ENCODE measurements at regions of chr6 and their contacts with region 1.

Region 1: DNA sequence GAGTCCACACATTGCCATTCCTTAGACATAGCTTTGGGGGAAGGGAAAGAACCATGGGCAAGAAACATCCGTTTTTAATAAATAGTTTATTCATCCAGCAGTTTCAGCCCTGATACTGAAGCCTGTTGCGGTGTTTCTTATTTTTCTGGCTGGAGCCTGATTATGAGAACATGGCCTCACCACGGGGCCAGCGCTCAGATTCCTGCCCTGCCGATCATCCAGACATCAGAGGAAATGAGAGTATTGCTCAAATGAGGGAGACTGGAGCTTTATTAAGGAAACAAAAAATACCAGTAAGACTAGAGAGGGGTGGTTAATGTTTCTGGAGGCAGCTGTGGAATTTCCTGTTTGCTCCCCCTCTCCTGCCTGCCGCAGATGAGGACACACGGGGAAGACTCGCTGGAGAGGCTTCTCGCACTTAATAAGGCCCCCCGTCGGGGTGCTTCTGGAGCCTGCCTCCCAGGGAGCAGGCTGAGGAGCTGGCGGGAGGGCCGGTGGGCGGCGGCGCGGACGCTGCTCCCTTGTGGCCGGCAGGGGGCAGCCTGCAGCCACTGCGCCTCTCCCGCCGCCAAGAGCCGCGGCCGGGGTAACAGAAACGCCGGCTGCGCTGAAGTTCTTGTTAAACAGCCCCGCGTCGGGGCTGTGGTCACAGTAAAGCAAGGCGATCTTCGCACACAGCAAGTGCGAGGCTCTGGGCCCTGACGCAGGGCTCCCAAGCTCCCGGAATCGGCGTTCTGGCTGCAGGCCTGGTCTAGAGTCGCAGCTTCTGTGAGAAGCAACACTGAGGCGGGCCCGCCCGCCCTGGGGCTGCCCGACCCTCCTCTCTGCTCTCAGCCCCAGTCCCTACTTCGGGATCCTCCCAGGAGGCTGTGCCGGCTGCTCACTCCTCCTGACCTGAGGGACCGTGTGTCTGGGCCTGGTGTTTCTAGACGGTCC is 17.5 kb downstream of the LEMD2 start:
- DNase-seq: peak; percentile 92
- H3K4me3 ChIP-seq: peak overlapping the region in 1 of 2 experiments; percentile 40; a peak in 1 of 4 replicates
- H3K27ac ChIP-seq: peak overlapping the region; percentile 78 to 84
- H3K4me1 ChIP-seq: peaks cover 16 to 48% of the 10 kb centered on the region in 2 experiments; a peak in 3 of 4 replicates
- H3K27me3 ChIP-seq: no peaks in the 10 kb centered on the region
- CTCF ChIP-seq: peak; percentile 92
- EP300 ChIP-seq: peak; percentile 30 to 68; a peak in 2 of 4 replicates
- RAD21 ChIP-seq: peak; percentile 84

Region 2: GRCh38 chr6:33711140-33712129 is 60.0 kb before region 1 on chr6 and contains the start of gene UQCC2:
- CTCF ChIA-PET with region 1: interaction called, 21 read pairs
- POLR2A ChIA-PET with region 1: interaction called, 5 read pairs
- DNase-seq: peak; percentile 97
- H3K4me3 ChIP-seq: peak within 1 kb of the TSS; percentile 86 to 87
- H3K27ac ChIP-seq: peak within 1 kb of the TSS; percentile 79 to 97
- H3K4me1 ChIP-seq: peaks cover 8 to 17% of the 10 kb centered on the region in 2 experiments; a peak in 3 of 4 replicates
- H3K27me3 ChIP-seq: no peaks in the 10 kb centered on the region
- CTCF ChIP-seq: peak; percentile 68
- EP300 ChIP-seq: no peak
- RAD21 ChIP-seq: peak; percentile 82
- polyA plus RNA-seq, gene UQCC2: 49.8 and 59.0 TPM in 2 replicates

Region 3: DNA sequence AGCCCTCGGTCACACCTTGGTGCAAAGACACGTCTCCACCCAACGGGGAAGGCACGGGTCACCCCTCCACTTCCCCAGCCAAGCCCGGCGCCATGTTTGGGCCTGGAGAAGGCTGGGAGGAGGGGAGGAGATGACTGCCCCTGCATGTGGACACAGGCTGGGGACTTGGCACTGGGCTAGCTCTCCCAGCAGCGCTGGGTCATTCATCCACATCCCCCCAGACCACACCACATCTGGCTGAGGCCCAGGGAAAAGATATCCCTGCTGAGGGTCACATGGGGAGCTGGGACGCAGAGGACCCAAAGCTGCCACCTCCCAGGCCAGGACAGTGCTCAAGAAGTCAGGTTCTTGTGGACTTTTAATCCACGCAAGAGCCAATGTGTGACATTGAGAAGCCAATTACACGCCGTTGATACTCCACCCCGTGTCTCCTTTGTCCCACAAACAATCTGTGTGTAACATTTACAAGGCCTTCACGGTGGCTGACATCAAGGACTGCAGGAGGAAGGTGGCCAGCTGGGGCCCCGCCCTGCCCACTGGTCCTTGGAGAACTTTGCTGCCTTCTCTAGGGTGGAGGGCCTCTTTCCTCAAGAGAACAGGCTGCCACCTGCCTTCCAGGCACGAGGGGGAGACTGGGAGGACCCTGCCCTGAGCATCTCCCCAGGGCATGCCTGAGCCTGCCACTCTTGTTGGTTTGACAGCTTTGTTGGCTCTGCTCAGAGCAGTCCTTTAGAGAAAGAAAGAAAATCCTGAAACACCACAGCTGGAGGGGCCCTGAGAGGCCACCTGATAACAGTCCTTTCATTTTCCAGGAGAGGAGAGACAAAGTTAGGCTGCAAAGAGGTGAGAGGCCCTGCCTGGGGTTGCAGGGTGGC is 19.4 kb before region 1 on chr6:
- CTCF ChIA-PET with region 1: interaction called, 95 read pairs
- POLR2A ChIA-PET with region 1: no interaction called
- DNase-seq: no peak
- H3K4me3 ChIP-seq: no peak overlapping the region
- H3K27ac ChIP-seq: no peak overlapping the region
- H3K4me1 ChIP-seq: peaks cover 0 to 21% of the 10 kb centered on the region in 2 experiments; a peak in 1 of 4 replicates
- H3K27me3 ChIP-seq: no peaks in the 10 kb centered on the region
- CTCF ChIP-seq: no peak
- EP300 ChIP-seq: no peak
- RAD21 ChIP-seq: no peak

Region 4: DNA sequence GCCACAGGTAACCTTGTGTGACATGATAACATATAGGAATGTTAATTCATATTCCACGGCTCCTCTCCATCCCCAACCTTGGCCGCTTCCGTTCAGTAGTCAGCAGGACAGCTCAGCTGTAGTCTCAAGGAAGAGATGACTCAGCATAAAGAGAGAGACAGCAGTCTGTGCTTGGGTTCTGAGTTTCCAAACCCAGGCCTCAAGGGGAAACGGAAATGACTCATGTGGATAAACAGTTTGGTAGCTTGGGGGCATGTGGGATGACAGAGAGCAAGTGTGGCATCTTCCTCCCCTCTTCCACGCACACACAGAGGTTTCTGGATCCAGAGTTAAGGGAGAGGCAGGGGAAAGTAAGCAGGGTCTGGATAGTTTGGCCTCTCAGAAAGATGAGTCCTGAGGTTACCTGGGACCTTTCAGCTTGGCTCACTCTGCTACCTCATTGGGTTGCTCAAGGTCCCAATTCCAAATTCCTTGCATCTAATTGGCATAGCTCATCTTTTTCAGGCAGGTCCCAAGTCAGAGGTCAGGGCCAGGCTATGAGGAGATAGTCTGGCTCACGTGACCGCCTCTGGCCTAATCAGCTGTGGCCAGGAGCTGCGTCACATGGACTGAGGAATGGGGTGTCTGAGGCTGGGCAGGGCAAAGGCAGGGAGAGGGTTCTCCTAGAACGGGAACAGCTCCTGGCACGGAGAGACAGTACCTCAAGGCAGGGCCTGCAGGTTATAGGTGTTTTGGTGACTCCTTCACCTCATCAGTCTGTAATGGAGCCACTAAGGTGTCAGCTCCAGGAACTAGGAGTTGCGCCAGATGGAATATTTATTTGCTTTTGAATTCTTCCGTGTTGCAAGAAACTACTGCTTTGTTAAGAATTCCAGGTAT is 68.9 kb after region 1 on chr6:
- CTCF ChIA-PET with region 1: interaction called, 13 read pairs
- POLR2A ChIA-PET with region 1: interaction called, 4 read pairs
- DNase-seq: no peak
- H3K4me3 ChIP-seq: no peak overlapping the region
- H3K27ac ChIP-seq: peak overlapping the region; percentile 24 to 84; a peak in 3 of 4 replicates
- H3K4me1 ChIP-seq: peaks cover 28 to 30% of the 10 kb centered on the region in 2 experiments; a peak in 3 of 4 replicates
- H3K27me3 ChIP-seq: no peaks in the 10 kb centered on the region
- CTCF ChIP-seq: no peak
- EP300 ChIP-seq: peak in 1 of 2 experiments; percentile 79; a peak in 1 of 4 replicates
- RAD21 ChIP-seq: no peak

Region 5: DNA sequence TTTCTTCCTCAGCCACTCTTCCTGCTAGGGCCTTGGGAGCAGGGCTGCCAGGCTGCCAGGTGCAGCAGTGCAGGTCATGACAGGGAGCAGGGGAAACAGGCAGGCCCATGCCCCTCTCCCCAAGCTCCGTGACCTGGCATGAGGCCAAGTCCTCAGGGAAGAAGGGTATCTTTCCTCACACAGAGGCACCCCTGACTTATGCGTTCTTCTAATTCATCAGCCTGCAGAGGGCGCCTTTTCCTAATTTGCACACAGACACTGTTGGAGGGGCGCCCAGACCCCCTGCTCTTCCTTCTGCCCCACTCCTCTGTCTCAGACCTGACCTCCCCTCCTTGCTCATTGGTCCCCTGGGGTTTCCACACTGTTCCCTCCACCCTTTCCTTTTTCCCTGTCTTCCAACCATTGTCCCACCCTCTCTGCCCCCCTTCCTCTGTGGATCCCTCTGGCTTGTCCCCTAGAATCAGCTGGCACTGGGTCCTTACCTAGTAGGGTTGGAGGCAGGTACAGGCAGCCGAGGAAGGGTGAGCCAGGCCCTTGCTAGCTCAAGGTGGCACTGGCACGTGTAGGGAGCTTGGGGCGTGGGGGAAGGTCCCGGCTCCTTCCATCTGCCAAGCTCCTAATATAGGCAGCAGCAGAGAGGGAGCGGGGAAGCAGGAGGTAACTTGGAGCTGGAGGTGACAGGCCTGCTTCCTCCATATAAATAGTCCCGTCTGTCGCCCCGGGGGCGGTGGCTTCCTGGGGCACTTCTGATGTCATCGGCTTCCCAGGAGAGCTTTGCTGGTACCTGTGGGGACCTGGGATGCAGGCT is 187.3 kb after region 1 on chr6:
- CTCF ChIA-PET with region 1: interaction called, 18 read pairs
- POLR2A ChIA-PET with region 1: no interaction called
- DNase-seq: peak; percentile 56
- H3K4me3 ChIP-seq: no peak overlapping the region; a peak in 1 of 4 replicates
- H3K27ac ChIP-seq: no peak overlapping the region
- H3K4me1 ChIP-seq: peaks cover 0 to 10% of the 10 kb centered on the region in 2 experiments; a peak in 1 of 4 replicates
- H3K27me3 ChIP-seq: no peaks in the 10 kb centered on the region
- CTCF ChIP-seq: peak; percentile 40
- EP300 ChIP-seq: no peak
- RAD21 ChIP-seq: no peak; the same call in 1 of the 2 replicates

Region 6: DNA sequence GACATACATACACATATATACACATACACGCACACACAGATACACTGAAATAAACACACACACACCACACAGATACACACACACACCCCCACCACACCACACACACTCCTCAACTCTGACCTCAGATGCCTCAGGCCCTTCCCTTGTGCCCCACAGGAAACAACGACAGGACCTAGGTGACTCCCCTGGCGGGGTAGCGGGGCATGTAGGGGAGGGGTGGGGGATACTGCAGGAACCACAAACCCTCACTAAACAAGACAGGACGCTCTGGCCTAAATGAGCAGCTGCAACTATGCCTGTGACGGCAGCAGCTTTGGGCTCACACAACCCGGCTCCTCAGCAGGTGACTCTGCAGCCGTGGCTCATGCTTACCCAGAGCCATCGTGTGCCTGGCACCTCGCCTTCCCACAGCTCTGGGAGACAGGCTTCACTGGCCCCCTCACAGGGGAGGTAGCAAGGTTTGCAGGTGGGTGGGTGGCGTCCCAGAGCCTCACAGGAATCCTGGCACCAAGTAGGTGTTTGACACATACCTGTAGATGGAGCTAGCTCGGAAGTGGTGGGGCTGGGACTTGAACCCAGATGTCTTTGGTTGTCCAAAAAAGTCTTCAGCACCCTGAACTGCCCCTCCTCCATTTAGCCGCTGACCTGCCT is 273.7 kb after region 1 on chr6:
- CTCF ChIA-PET with region 1: interaction called, 20 read pairs
- POLR2A ChIA-PET with region 1: interaction called, 4 read pairs
- DNase-seq: no peak
- H3K4me3 ChIP-seq: no peak overlapping the region
- H3K27ac ChIP-seq: peak overlapping the region in 1 of 2 experiments; percentile 31; a peak in 1 of 4 replicates
- H3K4me1 ChIP-seq: peaks cover 0 to 20% of the 10 kb centered on the region in 2 experiments; a peak in 1 of 4 replicates
- H3K27me3 ChIP-seq: peaks cover 14% of the 10 kb centered on the region; the same call in 1 of the 2 replicates
- CTCF ChIP-seq: no peak
- EP300 ChIP-seq: no peak
- RAD21 ChIP-seq: no peak

Region 7: DNA sequence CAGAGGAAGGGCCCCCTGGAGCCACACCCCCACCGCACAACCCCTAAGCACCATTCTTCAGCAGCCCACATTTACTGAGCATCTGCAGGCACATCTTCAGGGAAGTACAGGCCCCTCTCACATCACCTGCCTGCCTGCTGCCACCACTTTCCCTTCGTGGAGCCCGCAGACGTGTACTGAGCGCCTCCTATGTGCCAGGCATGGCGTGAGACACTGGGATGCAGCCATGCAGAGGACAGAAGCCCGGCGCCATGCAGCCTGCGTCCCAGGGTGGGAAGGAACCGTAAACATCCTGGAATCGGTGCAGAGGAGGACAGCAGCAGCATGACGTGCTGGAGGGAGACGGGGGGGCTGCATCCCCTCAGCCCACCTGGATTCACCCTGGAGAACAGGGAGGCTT is 296.4 kb after region 1 on chr6:
- CTCF ChIA-PET with region 1: interaction called, 15 read pairs
- POLR2A ChIA-PET with region 1: no interaction called
- DNase-seq: no peak
- H3K4me3 ChIP-seq: no peak overlapping the region
- H3K27ac ChIP-seq: no peak overlapping the region
- H3K4me1 ChIP-seq: peaks cover 0 to 11% of the 10 kb centered on the region in 2 experiments; a peak in 1 of 4 replicates
- H3K27me3 ChIP-seq: peaks cover 8% of the 10 kb centered on the region
- CTCF ChIP-seq: no peak
- EP300 ChIP-seq: no peak
- RAD21 ChIP-seq: peak; percentile 27; the same call in 1 of the 2 replicates

Measured in SK-N-SH (cell line).